Prostate gland (tissue), 2 donors: ENCODE measurements at regions of chr20 and their contacts with region 1.

Region 1: DNA sequence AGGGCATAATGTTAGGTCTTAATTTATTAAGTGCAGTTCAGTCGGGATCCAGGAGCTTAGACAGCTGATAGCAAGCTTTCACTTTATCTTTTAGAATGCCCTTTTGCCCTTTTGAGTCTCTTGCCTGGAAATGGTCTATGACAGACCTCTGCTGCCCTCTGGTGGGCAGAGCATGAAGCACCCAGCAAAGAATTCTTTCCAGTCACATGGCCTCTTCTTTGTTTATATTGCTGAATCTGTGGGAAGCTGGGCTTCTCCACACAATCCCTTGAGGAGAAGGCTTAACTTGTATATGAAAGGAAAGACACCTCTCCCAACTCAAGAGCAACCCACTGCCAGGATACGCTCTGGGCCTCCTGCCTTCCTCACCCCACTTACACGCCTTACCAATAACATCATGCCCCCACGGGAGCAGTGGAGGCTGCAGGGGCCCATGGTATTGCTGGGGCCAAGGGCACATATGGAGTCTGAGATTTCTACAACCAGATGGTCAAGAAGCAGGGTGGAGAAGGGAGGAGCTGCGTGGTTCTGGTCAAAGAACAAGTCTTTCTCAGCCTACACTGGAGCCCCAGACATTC is 20.4 kb downstream of the WFDC3 start:
- DNase-seq: peak; percentile 64
- H3K4me3 ChIP-seq: no peak overlapping the region
- H3K27ac ChIP-seq: no peak overlapping the region
- H3K4me1 ChIP-seq: no peaks in the 10 kb centered on the region
- H3K27me3 ChIP-seq: no peaks in the 10 kb centered on the region
- CTCF ChIP-seq: peak; percentile 94 to 96 (median 95)
- POLR2A ChIP-seq: no peak

Region 2: DNA sequence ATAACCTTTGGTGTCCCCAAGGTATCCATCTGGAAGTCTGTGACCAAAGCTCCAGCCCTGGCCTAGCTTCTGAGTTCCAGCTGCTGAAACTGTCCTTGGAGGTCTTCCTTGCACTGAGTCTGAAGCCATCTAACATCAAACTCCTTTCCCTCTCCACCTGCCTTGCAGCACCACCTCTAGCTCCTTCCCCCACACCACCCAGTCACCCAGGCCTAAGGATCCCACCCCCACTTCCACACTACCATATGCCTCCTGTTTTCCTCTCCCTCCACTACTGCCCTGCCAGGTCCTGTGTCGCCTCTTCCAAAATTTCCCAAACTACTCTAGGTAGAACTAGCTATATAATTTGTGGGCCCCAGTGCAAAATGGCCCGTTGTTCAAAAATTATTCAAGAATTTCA is 452.3 kb before region 1 on chr20:
- intact Hi-C with region 1: loop called (anchors 5 kb)
- DNase-seq: no peak
- H3K4me3 ChIP-seq: no peak overlapping the region
- H3K27ac ChIP-seq: no peak overlapping the region
- H3K4me1 ChIP-seq: no peaks in the 10 kb centered on the region
- H3K27me3 ChIP-seq: peaks cover 6% of the 10 kb centered on the region
- CTCF ChIP-seq: no peak
- POLR2A ChIP-seq: no peak

Region 3: DNA sequence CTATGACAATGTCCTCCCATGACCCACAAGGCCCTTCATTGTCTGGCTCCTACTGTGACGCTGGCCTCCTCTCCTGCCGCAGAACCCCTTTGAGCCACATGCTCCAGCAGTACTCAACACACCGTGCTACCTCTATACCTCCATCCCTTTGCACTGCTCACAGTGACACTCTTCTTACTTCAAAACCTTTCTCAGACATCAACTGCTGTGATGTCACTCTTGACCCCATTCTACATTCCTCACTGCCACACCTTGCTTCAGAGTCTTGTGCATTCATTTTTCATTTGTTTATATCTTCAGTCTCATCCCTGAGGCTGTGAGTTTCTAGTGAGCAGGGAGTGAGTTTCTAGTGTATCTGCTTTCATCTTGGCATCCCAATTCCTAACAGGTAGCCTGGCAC is 227.5 kb before region 1 on chr20:
- intact Hi-C with region 1: loop called (anchors 2 kb)
- DNase-seq: no peak
- H3K4me3 ChIP-seq: no peak overlapping the region
- H3K27ac ChIP-seq: no peak overlapping the region
- H3K4me1 ChIP-seq: no peaks in the 10 kb centered on the region
- H3K27me3 ChIP-seq: no peaks in the 10 kb centered on the region
- CTCF ChIP-seq: no peak
- POLR2A ChIP-seq: no peak

Region 4: DNA sequence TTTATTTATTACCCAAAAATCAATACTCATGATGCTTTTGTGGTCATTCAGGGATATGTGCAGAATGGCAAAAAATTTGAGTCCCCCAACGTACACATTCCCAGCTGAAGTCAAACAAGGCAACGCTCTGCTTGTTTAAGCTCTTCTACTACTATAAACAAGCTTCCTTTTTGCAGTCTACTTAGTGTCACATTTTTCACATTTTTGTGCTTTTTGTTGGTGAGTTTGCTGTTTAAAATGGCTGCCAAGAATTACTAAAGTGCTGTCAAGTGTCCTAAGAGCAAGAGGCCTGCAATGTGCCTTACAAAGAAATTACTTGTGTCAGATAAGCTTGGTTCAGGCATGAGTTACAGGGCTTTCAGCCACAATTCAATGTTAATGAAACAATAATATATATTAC is 194.3 kb before region 1 on chr20:
- intact Hi-C with region 1: no loop called
- DNase-seq: no peak
- H3K4me3 ChIP-seq: no peak overlapping the region
- H3K27ac ChIP-seq: no peak overlapping the region
- H3K4me1 ChIP-seq: no peaks in the 10 kb centered on the region
- H3K27me3 ChIP-seq: no peaks in the 10 kb centered on the region
- CTCF ChIP-seq: no peak
- POLR2A ChIP-seq: no peak

Region 5: GRCh38 chr20:46283426-46284039 is 512.3 kb after region 1 on chr20:
- intact Hi-C with region 1: no loop called
- DNase-seq: no peak
- H3K4me3 ChIP-seq: no peak overlapping the region
- H3K27ac ChIP-seq: no peak overlapping the region
- H3K4me1 ChIP-seq: no peaks in the 10 kb centered on the region
- H3K27me3 ChIP-seq: peaks cover 3% of the 10 kb centered on the region
- CTCF ChIP-seq: no peak
- POLR2A ChIP-seq: no peak